ENCODE measurements at regions of chr6 and their contacts with region 1.

Region 1: GRCh38 chr6:163324411-163325389 is 89.8 kb upstream of the QKI start:
- DNase-seq: no peak
- ATAC-seq: peak; percentile 87
- H3K4me3 ChIP-seq: peak overlapping the region in 1 of 2 experiments; percentile 35; a peak in 2 of 4 replicates
- H3K27ac ChIP-seq: peak overlapping the region; percentile 87
- H3K4me1 ChIP-seq: peaks cover 39% of the 10 kb centered on the region
- H3K27me3 ChIP-seq: no peaks in the 10 kb centered on the region
- CTCF ChIP-seq: no peak

Region 2: DNA sequence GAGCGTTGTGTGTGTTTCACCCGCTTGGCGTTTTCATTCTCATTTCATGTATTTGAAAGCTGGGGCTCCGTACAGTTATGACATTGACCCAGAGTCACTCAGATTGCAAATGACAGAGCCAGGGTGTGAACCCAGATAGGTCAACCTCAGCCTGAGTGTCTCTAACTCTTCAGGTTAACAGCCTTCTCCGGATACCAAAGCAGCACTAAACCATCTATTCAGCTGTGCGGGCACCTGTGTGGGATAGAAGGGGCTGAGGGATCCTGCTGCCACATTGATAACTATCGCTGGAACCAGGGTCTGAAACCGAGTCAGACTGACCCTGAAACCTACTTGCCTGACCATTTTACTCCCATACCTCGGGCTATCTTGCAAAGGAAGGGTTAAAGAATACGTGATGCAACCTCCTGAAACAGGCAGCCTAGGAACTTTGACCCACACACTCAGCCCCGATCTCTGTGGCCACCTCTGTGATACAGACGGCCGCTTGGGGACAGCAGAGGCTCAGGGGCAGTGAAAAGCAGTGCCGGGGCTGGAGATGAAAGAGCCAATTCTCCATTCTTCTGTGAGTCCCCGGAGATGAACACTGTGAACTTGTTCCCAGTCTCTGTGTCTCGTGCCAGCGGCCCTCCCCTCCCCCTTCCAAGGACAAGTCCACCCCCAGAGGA is 143.7 kb before region 1 on chr6:
- CTCF ChIA-PET with region 1: no interaction called
- POLR2A ChIA-PET with region 1: no interaction called
- in situ Hi-C with region 1: no loop called
- intact Hi-C with region 1: loop called (anchors 10 kb)
- DNase-seq: peak; percentile 50
- ATAC-seq: peak; percentile 97
- H3K4me3 ChIP-seq: 0 out of 4 replicates have a peak overlapping the region, but pooled peaks of 1 of the 2 experiments have one; percentile 5
- H3K27ac ChIP-seq: peak overlapping the region; percentile 87; the same call in 1 of the 2 replicates
- H3K4me1 ChIP-seq: peaks cover 11% of the 10 kb centered on the region
- H3K27me3 ChIP-seq: no peaks in the 10 kb centered on the region
- CTCF ChIP-seq: peak; percentile 95

Region 3: DNA sequence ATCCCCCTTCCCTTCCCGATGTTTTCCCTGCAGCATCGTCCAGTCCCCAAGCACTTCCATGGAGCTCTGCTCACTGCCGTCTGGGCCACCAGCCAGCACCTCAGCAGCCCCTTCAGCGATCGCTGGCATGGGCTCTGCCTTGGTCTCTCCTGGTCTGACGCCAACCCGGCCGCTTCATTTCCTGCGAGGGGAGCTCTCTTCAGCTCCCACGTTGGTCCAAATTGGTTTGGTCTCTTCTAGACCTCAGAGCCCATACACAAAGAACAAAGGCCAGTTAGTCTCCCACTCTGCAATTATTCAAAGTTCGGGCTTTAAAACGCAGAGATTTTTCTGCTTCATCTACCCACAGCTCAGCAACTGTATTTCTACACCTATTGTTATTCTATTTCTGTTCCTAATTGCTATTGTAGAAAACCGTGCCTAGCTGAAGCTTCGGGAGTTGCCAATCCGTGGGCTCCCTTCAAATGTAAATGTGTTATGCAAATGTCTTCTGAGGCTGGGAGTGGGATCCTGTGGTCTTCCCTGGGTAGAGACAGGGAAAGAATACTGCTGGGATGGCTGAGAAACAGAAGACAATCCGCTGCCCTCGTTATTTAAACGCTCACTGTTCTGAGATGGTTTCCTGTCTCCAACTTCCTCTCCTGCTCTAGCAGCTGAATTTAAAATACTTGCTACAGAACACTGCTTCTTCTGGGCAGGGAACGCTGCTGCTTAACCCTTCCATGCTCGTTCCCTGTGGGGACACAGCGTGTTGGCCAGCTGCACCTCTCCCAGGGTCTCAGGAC is 64.4 kb before region 1 on chr6:
- CTCF ChIA-PET with region 1: no interaction called
- POLR2A ChIA-PET with region 1: no interaction called
- in situ Hi-C with region 1: no loop called
- intact Hi-C with region 1: no loop called
- DNase-seq: no peak
- ATAC-seq: no peak
- H3K4me3 ChIP-seq: no peak overlapping the region
- H3K27ac ChIP-seq: no peak overlapping the region
- H3K4me1 ChIP-seq: no peaks in the 10 kb centered on the region
- H3K27me3 ChIP-seq: no peaks in the 10 kb centered on the region
- CTCF ChIP-seq: no peak

Region 4: GRCh38 chr6:163926642-163927041 is 601.9 kb after region 1 on chr6:
- CTCF ChIA-PET with region 1: no interaction called
- POLR2A ChIA-PET with region 1: no interaction called
- in situ Hi-C with region 1: no loop called
- intact Hi-C with region 1: no loop called
- DNase-seq: no peak
- ATAC-seq: no peak
- H3K4me3 ChIP-seq: no peak overlapping the region
- H3K27ac ChIP-seq: no peak overlapping the region
- H3K4me1 ChIP-seq: no peaks in the 10 kb centered on the region
- H3K27me3 ChIP-seq: no peaks in the 10 kb centered on the region
- CTCF ChIP-seq: no peak